ENCODE measurements at regions of chr6 and their contacts with region 1.

Region 1: DNA sequence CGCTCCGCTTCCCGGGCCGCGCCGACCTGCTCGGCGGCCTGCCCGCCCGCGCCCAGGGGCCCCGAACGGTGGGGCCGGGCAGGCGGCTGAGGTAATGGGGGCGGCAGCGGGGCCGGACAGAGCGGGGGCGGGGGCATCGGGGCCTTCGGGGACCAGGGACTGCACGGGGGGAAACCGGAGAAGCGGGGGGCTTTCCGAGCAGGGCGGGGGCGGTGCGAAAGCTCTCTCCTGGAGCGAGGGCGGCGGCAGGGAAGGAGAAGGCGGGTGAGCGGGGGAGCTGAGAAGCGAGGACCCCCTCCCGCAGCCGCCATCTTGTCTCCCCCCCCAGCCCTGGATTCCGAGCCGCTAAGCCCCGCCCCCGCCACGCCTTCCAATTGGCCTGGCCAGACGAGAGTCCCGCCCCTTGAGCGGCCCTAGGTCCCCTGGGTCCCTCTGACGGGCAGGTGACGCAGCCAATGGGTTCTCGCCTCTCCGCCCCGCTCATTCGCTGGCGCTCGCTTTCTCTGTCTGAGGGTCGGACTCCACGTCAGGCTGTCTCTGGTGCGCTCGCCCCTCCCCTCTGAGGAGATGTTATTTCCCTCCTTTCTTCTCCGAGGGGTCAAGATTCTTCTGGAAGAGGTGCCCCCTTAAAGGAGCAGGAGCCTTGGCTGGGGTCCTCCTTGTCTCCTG is 470 bp downstream of the BRPF3 start:
- DNase-seq: peak in 1 of 2 donors; percentile 96
- H3K4me3 ChIP-seq: peak overlapping the region; percentile 64 to 96
- H3K27ac ChIP-seq: peak overlapping the region; percentile 95
- H3K4me1 ChIP-seq: peaks cover 33% of the 10 kb centered on the region
- H3K27me3 ChIP-seq: no peaks in the 10 kb centered on the region
- CTCF ChIP-seq: no peak
- POLR2A ChIP-seq: peak in 1 of 2 donors; percentile 49

Region 2: GRCh38 chr6:36027501-36028087 is 169.4 kb before region 1 on chr6 and contains the start of gene MAPK14:
- intact Hi-C with region 1: loop called (anchors 2 kb)
- DNase-seq: peak in 1 of 2 donors; percentile 99
- H3K4me3 ChIP-seq: peak within 1 kb of the TSS; percentile 87 to 95
- H3K27ac ChIP-seq: peak within 1 kb of the TSS; percentile 97
- H3K4me1 ChIP-seq: peaks cover 37% of the 10 kb centered on the region
- H3K27me3 ChIP-seq: no peaks in the 10 kb centered on the region
- CTCF ChIP-seq: peak; percentile 81 to 98 (median 96)
- POLR2A ChIP-seq: peak; percentile 41 to 94
- total RNA-seq, gene MAPK14: 71.9 TPM

Region 3: GRCh38 chr6:36120979-36121786 is 75.8 kb before region 1 on chr6:
- intact Hi-C with region 1: no loop called
- DNase-seq: peak in 1 of 2 donors; percentile 87
- H3K4me3 ChIP-seq: no peak overlapping the region
- H3K27ac ChIP-seq: peak overlapping the region; percentile 49
- H3K4me1 ChIP-seq: peaks cover 52% of the 10 kb centered on the region
- H3K27me3 ChIP-seq: no peaks in the 10 kb centered on the region
- CTCF ChIP-seq: no peak
- POLR2A ChIP-seq: no peak

Region 4: GRCh38 chr6:36131511-36132245 is 65.3 kb before region 1 on chr6:
- intact Hi-C with region 1: loop called (anchors 5 kb)
- DNase-seq: peak in 1 of 2 donors; percentile 85
- H3K4me3 ChIP-seq: peak overlapping the region; percentile 50 to 59
- H3K27ac ChIP-seq: peak overlapping the region; percentile 73
- H3K4me1 ChIP-seq: peaks cover 24% of the 10 kb centered on the region
- H3K27me3 ChIP-seq: no peaks in the 10 kb centered on the region
- CTCF ChIP-seq: no peak
- POLR2A ChIP-seq: no peak

Measured in vagina (tissue), 2 donors.